Activated CD4-positive, alpha-beta memory T cell treated with anti-CD3 and anti-CD28 coated beads for 36 hours (primary cell): ENCODE measurements at regions of chr14 and their contacts with region 1.

Region 1: GRCh38 chr14:60656686-60657455 is 7.6 kb upstream of the SIX1 start:
- DNase-seq: peak; percentile 36
- H3K4me3 Mint-ChIP-seq: peak overlapping the region; percentile 71
- H3K27ac Mint-ChIP-seq: no peak overlapping the region
- H3K4me1 Mint-ChIP-seq: peaks cover 44% of the 10 kb centered on the region
- H3K27me3 Mint-ChIP-seq: peaks cover 73% of the 10 kb centered on the region

Region 2: GRCh38 chr14:60637479-60638315 is 19.2 kb before region 1 on chr14:
- CTCF ChIA-PET with region 1: interaction called, 4 read pairs
- POLR2A ChIA-PET with region 1: no interaction called
- intact Hi-C with region 1: loop called (anchors 2 kb)
- DNase-seq: no peak
- H3K4me3 Mint-ChIP-seq: no peak overlapping the region
- H3K27ac Mint-ChIP-seq: no peak overlapping the region
- H3K4me1 Mint-ChIP-seq: peaks cover 14% of the 10 kb centered on the region
- H3K27me3 Mint-ChIP-seq: peaks cover 64% of the 10 kb centered on the region

Region 3: GRCh38 chr14:60734465-60735242 is 77.8 kb after region 1 on chr14 and contains the start of gene MNAT1:
- CTCF ChIA-PET with region 1: no interaction called
- POLR2A ChIA-PET with region 1: no interaction called
- intact Hi-C with region 1: no loop called
- DNase-seq: peak; percentile 85
- H3K4me3 Mint-ChIP-seq: peak within 1 kb of the TSS; percentile 95
- H3K27ac Mint-ChIP-seq: peak within 1 kb of the TSS; percentile 67
- H3K4me1 Mint-ChIP-seq: peaks cover 15% of the 10 kb centered on the region
- H3K27me3 Mint-ChIP-seq: peaks cover 16% of the 10 kb centered on the region
- total RNA-seq, gene MNAT1: 35.3 to 38.5 TPM

Region 4: DNA sequence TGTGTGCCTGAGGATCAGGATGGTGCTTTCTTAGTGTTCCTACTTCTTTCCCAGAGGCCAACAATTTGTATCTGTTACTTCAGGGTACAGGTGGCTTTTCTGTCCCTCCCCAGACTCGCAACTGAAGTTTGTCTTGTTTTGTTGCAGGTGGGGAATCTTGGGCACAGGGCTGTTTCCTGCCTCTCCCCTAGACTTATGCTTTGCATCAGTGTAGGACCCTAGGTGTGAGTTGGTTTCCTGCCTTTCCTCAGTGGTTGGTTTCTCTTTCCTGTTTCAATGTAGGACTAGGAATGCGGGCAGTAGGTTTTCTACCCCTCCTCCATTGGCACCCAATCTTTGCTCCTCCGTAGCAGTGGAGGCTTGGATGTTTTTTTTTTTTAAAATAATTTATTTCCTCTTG is 237.0 kb after region 1 on chr14:
- CTCF ChIA-PET with region 1: no interaction called
- POLR2A ChIA-PET with region 1: no interaction called
- intact Hi-C with region 1: no loop called
- DNase-seq: no peak
- H3K4me3 Mint-ChIP-seq: no peak overlapping the region
- H3K27ac Mint-ChIP-seq: no peak overlapping the region
- H3K4me1 Mint-ChIP-seq: peaks cover 16% of the 10 kb centered on the region
- H3K27me3 Mint-ChIP-seq: no peaks in the 10 kb centered on the region